ENCODE measurements at regions of chr5 and their contacts with region 1.

Region 1: DNA sequence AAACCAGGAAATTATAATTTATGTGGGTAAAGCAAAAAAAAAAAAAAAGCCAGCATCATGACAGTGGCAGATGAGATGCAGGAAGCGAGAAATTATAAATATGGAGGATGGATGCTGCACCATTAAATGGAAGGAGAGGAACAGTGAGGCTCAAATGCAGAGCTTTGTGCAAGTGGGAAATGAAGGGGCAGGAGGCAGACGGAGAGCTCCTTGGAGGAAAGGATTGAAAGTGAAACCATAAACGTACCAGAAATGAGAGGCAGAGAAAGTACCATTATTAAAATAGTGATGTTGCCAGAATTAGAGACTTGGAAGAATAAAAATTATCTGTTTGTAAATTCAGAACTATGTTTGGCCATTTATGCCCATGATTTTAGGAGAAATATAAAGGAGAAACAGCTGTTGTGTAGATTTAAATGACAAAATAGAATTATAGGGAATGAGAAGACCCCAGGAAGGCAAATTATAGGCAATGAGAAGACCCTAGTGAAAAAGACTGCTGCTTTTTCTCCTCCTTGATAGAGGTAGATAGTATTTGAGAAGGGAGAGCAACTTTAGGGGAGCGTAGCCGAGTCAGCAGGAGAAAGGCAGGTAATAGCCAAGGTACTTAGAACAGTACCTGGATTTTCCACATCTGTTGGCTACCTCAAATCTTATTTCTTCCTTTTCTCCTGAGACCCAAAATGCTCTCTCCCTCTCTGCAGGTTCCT is 341.0 kb upstream of the CD180 start:
- DNase-seq: no peak
- H3K4me3 ChIP-seq: peak overlapping the region; percentile 8; the same call in 1 of the 2 replicates
- H3K27me3 ChIP-seq: no peaks in the 10 kb centered on the region
- CTCF ChIP-seq: no peak

Region 2: GRCh38 chr5:67515020-67515689 is 22.4 kb before region 1 on chr5:
- CTCF ChIA-PET with region 1: no interaction called
- POLR2A ChIA-PET with region 1: interaction called, 10 read pairs
- DNase-seq: no peak
- H3K4me3 ChIP-seq: no peak overlapping the region
- H3K27me3 ChIP-seq: no peaks in the 10 kb centered on the region
- CTCF ChIP-seq: no peak

Region 3: DNA sequence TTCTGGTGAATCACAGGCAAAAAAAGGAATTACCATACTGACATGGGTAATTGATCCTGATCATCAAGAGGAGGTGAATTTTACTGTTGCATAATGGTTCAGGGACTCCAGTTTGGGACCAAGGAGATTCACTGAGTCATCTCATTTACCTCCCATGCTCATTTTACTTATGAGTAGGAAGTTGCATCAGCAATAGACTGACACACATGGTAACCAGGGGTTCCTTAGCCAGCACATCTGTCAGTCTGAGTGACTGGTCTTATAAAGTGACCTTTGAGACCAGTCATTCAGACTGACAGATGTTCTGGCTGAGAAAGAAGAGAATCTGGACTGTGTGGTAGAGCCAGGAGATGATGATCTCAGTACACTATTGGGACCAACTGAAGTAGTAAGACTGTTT is 43.6 kb after region 1 on chr5:
- CTCF ChIA-PET with region 1: no interaction called
- POLR2A ChIA-PET with region 1: no interaction called
- DNase-seq: peak; percentile 12
- H3K4me3 ChIP-seq: no peak overlapping the region
- H3K27me3 ChIP-seq: no peaks in the 10 kb centered on the region
- CTCF ChIP-seq: no peak